ENCODE measurements at regions of chr2 and their contacts with region 1.

Region 1: GRCh38 chr2:152284398-152284797 is 50.6 kb upstream of the FMNL2 start:
- DNase-seq: no peak
- H3K4me3 ChIP-seq: no peak overlapping the region
- CTCF ChIP-seq: no peak
- POLR2A ChIP-seq: no peak

Region 2: GRCh38 chr2:151575338-151575737 is 709.1 kb before region 1 on chr2:
- intact Hi-C with region 1: no loop called
- DNase-seq: peak in 1 of 2 donors; percentile 29
- H3K4me3 ChIP-seq: no peak overlapping the region
- CTCF ChIP-seq: no peak
- POLR2A ChIP-seq: no peak

Region 3: GRCh38 chr2:152154462-152154861 is 129.9 kb before region 1 on chr2:
- intact Hi-C with region 1: loop called (anchors 5 kb)
- DNase-seq: no peak
- H3K4me3 ChIP-seq: no peak overlapping the region
- CTCF ChIP-seq: no peak
- POLR2A ChIP-seq: no peak

Measured in lower leg skin (tissue), 4 donors.